ENCODE measurements at regions of chr4 and their contacts with region 1.

Region 1: DNA sequence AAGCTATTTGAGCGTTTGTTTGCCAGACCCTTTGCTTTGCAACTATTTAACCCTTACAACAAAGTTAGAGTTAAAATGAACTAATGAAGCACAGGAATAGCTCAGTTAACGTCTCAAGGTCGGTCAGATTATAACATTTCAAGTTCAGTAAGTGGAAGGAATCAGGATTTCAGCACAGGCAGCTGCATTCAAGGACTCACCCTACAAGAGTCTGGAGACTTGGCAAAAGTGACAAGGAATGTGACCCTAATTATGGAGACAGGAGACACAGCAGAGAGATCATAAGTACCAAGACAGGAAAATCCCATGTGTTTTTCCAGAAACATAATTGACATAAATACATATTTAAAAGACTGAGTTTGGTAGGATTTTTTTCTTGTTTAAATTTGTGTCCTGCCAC is 1481.7 kb downstream of the TECRL start:
- DNase-seq: no peak
- ATAC-seq: no peak

Region 2: DNA sequence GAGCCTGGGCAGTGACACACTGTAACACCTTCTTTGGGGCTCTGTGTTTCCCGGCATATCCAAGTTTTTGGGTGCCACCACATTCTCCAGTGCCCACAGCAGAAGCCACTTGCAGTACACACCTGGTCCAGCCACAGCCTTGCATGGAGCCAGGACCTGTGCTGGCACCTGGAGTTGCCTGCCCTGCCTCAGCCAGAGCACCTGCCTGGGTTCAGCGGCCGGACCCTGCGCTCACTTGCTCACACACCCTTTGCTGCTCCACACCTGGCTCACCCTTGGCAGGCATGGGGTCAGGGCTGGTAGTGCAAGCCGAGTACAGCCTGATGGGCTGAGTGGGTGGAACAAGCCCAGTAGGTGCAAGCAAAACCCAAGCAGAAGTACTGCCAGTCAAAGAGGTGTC is 29.5 kb before region 1 on chr4:
- intact Hi-C with region 1: no loop called
- DNase-seq: no peak
- ATAC-seq: no peak

Region 3: GRCh38 chr4:63036159-63036866 is 108.7 kb after region 1 on chr4:
- intact Hi-C with region 1: loop called in 1 of 2 experiments (anchors 10 kb)
- DNase-seq: peak; percentile 29
- ATAC-seq: peak; percentile 59 to 83